ENCODE measurements at regions of chr11 and their contacts with region 1.

Region 1: DNA sequence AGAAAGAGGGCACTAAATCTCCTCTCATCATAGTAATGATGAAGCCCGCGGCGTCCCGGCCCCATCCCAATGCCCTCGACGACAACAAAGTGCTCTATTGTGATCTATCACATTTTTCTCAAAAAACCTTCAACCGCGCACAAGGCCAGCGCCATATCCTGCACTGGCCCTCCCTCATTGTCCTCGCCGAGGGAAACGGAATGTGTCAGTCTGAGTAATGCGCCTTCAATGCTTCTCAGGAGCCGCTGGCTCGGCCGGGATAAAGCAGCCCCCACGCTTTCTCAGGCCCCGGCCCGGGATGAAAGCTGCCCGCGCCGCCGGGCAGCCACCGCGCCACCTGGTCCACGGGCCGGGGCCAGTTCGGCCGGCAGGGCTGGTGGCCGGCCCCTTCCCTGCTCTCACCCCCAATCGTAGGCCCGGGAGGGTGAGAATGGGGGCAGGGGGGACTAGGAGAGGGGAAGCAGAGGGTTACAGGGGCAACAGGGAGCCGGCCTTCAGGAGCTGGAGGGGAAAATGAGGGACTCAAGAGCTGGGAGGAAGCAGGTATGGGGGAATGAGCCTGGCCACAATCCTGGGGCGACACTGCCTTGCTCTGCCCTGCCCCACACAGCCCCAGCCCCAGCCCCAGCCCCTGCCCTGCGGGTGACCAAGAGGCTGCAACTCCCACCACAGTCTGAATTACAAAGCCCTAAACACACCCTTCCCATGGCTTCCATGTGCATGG is 10.0 kb upstream of the LINC01488 start:
- DNase-seq: peak; percentile 74
- H3K4me3 ChIP-seq: no peak overlapping the region
- H3K27ac ChIP-seq: peak overlapping the region; percentile 56
- H3K4me1 ChIP-seq: peaks cover 7% of the 10 kb centered on the region
- H3K27me3 ChIP-seq: no peaks in the 10 kb centered on the region
- CTCF ChIP-seq: no peak
- POLR2A ChIP-seq: no peak

Region 2: GRCh38 chr11:69497221-69497787 is 25.8 kb after region 1 on chr11:
- CTCF ChIA-PET with region 1: no interaction called
- POLR2A ChIA-PET with region 1: interaction called, 5 read pairs
- dilution Hi-C with region 1: no loop called
- intact Hi-C with region 1: loop called (anchors 1 kb)
- DNase-seq: peak; percentile 83
- H3K4me3 ChIP-seq: no peak overlapping the region
- H3K27ac ChIP-seq: peak overlapping the region; percentile 57
- H3K4me1 ChIP-seq: peaks cover 29% of the 10 kb centered on the region
- H3K27me3 ChIP-seq: no peaks in the 10 kb centered on the region
- CTCF ChIP-seq: no peak
- POLR2A ChIP-seq: no peak

Measured in endothelial cell of umbilical vein (primary cell).